Activated CD4-positive, alpha-beta T cell treated with anti-CD3 and anti-CD28 coated beads for 36 hours (primary cell): ENCODE measurements at regions of chr16 and their contacts with region 1.

Region 1: GRCh38 chr16:8655184-8655717 is 19.2 kb upstream of the ABAT start:
- DNase-seq: peak; percentile 74
- ATAC-seq: peak; percentile 93
- H3K4me3 Mint-ChIP-seq: no peak overlapping the region
- H3K27ac Mint-ChIP-seq: no peak overlapping the region
- H3K4me1 Mint-ChIP-seq: peaks cover 17% of the 10 kb centered on the region
- H3K27me3 Mint-ChIP-seq: no peaks in the 10 kb centered on the region

Region 2: GRCh38 chr16:7638306-7638705 is 1016.9 kb before region 1 on chr16:
- CTCF ChIA-PET with region 1: no interaction called
- POLR2A ChIA-PET with region 1: no interaction called
- intact Hi-C with region 1: no loop called
- DNase-seq: no peak
- ATAC-seq: no peak
- H3K4me3 Mint-ChIP-seq: no peak overlapping the region
- H3K27ac Mint-ChIP-seq: no peak overlapping the region
- H3K4me1 Mint-ChIP-seq: no peaks in the 10 kb centered on the region
- H3K27me3 Mint-ChIP-seq: no peaks in the 10 kb centered on the region

Region 3: GRCh38 chr16:8567750-8568617 is 87.3 kb before region 1 on chr16:
- CTCF ChIA-PET with region 1: interaction called, 5 read pairs
- POLR2A ChIA-PET with region 1: no interaction called
- intact Hi-C with region 1: loop called (anchors 1 kb)
- DNase-seq: peak; percentile 87
- ATAC-seq: peak; percentile 94
- H3K4me3 Mint-ChIP-seq: no peak overlapping the region
- H3K27ac Mint-ChIP-seq: no peak overlapping the region
- H3K4me1 Mint-ChIP-seq: peaks cover 4% of the 10 kb centered on the region
- H3K27me3 Mint-ChIP-seq: peaks cover 9% of the 10 kb centered on the region

Region 4: GRCh38 chr16:8572919-8573724 is 82.1 kb before region 1 on chr16:
- CTCF ChIA-PET with region 1: interaction called, 5 read pairs
- POLR2A ChIA-PET with region 1: no interaction called
- intact Hi-C with region 1: loop called in 1 of 2 experiments (anchors 1 kb)
- DNase-seq: peak; percentile 33
- ATAC-seq: peak; percentile 39
- H3K4me3 Mint-ChIP-seq: no peak overlapping the region
- H3K27ac Mint-ChIP-seq: peak overlapping the region; percentile 64
- H3K4me1 Mint-ChIP-seq: peaks cover 1% of the 10 kb centered on the region
- H3K27me3 Mint-ChIP-seq: peaks cover 27% of the 10 kb centered on the region

Region 5: GRCh38 chr16:8621572-8622314 is 33.5 kb before region 1 on chr16 and contains the start of gene METTL22:
- CTCF ChIA-PET with region 1: interaction called, 3 read pairs
- POLR2A ChIA-PET with region 1: no interaction called
- intact Hi-C with region 1: loop called in 1 of 2 experiments (anchors 2 kb)
- DNase-seq: peak; percentile 96
- ATAC-seq: peak; percentile 98
- H3K4me3 Mint-ChIP-seq: peak within 1 kb of the TSS; percentile 91
- H3K27ac Mint-ChIP-seq: peak within 1 kb of the TSS; percentile 87
- H3K4me1 Mint-ChIP-seq: peaks cover 28% of the 10 kb centered on the region
- H3K27me3 Mint-ChIP-seq: peaks cover 3% of the 10 kb centered on the region
- total RNA-seq, gene METTL22: 32.3 to 45.8 TPM